ENCODE measurements at regions of chr9 and their contacts with region 1.

Region 1: DNA sequence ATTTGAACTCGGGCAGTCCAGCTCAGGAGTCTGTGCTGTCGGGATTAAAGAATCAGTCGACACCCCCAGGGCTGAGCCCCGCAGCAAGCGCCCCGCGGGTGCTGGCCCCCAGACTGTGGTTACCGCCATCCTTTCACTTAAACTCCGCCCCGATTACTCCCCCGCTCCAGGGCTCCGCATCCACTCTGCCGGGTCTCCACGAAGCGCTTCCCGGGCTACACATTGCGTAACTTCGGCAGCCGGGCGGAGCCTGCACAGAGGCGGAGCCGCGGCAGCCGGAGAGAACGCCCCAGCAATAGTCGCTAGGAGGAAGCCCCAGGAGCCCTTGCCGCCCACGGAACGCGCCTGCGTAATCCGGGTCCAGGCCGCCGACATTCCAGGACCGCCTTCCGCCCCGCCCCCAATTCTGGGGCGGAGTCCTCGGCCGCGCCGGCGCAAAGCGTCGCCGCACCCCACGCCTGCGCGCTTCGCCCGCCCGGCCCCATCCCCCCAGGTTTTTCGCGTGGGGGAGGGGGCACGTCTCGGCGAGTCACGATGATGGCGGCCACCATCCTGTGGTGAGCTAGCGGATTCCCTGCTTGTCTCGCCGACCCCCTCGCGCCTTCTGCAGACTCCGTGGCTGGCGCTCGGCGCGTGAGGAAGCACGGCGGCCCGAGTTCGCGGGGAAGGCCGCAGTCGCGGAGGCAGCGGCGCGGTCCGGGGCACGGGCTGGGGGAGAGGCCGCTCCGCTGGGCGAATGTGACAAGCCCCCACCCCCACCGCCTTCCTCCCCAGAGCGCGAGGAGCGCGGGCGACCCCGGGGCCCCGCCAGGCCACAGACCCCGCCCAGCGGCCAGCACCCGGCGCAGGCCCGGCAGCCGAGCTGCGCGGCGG is at the start of gene RAD23B:
- DNase-seq: peak; percentile 99
- H3K4me3 Mint-ChIP-seq: peak within 1 kb of the TSS; percentile 86
- H3K27ac Mint-ChIP-seq: peak within 1 kb of the TSS; percentile 88
- H3K4me1 Mint-ChIP-seq: peaks cover 45% of the 10 kb centered on the region
- H3K27me3 Mint-ChIP-seq: no peaks in the 10 kb centered on the region
- total RNA-seq, gene RAD23B: 106 to 109 TPM

Region 2: DNA sequence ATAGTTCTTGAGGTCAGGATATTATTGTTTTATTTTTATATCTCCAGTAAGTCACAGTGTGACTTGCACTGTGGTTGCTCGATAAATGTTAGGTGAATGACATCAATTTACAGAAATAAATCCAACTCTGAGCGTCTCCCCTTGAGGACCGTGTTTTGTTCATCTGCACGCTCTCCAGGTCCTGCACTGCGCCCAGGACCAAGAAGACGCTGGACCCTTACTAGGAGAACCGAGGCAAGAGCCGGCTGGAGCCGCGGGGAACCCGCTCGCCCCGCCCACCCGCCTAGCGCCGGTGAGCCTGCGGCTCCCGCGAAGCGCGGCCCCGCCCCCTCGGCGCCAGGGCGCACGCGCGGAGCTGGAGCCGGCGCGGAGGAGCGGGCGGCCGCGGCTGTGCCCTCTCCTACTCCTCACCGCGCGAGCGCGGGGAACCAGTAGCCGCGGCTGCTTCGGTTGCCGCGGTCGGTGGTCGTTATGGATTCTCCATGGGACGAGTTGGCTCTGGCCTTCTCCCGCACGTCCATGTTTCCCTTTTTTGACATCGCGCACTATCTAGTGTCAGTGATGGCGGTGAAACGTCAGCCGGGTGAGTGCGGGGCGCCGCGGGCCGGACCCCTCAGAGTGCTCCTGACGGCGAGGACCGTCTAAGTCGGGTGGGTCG is 1588.7 kb before region 1 on chr9 and contains the start of gene TMEM38B:
- CTCF ChIA-PET with region 1: no interaction called
- intact Hi-C with region 1: loop called (anchors 2 kb)
- DNase-seq: peak; percentile 76
- H3K4me3 Mint-ChIP-seq: peak within 1 kb of the TSS; percentile 90
- H3K27ac Mint-ChIP-seq: peak within 1 kb of the TSS; percentile 75
- H3K4me1 Mint-ChIP-seq: peaks cover 33% of the 10 kb centered on the region
- H3K27me3 Mint-ChIP-seq: peaks cover 10% of the 10 kb centered on the region
- total RNA-seq, gene TMEM38B: 17.6 TPM

Region 3: GRCh38 chr9:107213561-107214028 is 69.4 kb before region 1 on chr9:
- CTCF ChIA-PET with region 1: interaction called, 3 read pairs
- intact Hi-C with region 1: loop called (anchors 1 kb)
- DNase-seq: peak; percentile 64
- H3K4me3 Mint-ChIP-seq: no peak overlapping the region
- H3K27ac Mint-ChIP-seq: peak overlapping the region; percentile 48
- H3K4me1 Mint-ChIP-seq: peaks cover 10% of the 10 kb centered on the region
- H3K27me3 Mint-ChIP-seq: peaks cover 9% of the 10 kb centered on the region

Region 4: DNA sequence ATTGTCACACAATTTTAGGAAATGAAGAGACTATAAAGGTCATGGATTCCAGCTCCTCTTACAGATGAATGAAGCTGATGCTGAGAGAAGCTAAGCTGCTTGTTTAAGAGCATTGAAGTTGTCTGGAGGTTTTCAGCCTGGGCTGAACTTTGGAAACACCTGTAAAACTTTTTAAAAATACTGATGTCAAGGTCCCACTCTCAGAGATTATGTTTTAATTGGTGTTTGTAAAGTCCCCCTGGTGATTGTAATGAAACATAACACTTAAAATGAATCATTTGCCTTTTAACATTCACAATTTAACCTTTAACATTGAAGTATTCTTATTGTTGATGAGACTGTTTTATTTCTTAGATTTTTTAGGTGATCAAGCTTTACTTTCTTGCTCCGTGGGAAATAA is 16.4 kb after region 1 on chr9:
- CTCF ChIA-PET with region 1: interaction called, 8 read pairs
- intact Hi-C with region 1: loop called (anchors 1 kb)
- DNase-seq: no peak
- H3K4me3 Mint-ChIP-seq: no peak overlapping the region
- H3K27ac Mint-ChIP-seq: no peak overlapping the region
- H3K4me1 Mint-ChIP-seq: peaks cover 39% of the 10 kb centered on the region
- H3K27me3 Mint-ChIP-seq: no peaks in the 10 kb centered on the region

Region 5: GRCh38 chr9:107340920-107341632 is 58.1 kb after region 1 on chr9:
- CTCF ChIA-PET with region 1: interaction called, 8 read pairs
- intact Hi-C with region 1: loop called (anchors 1 kb)
- DNase-seq: peak; percentile 92
- H3K4me3 Mint-ChIP-seq: no peak overlapping the region
- H3K27ac Mint-ChIP-seq: no peak overlapping the region
- H3K4me1 Mint-ChIP-seq: peaks cover 9% of the 10 kb centered on the region
- H3K27me3 Mint-ChIP-seq: peaks cover 2% of the 10 kb centered on the region

Region 6: GRCh38 chr9:108933718-108934322 is 1650.8 kb after region 1 on chr9 and contains the start of gene ELP1:
- CTCF ChIA-PET with region 1: no interaction called
- intact Hi-C with region 1: loop called (anchors 1 kb)
- DNase-seq: peak; percentile 94
- H3K4me3 Mint-ChIP-seq: peak within 1 kb of the TSS; percentile 95
- H3K27ac Mint-ChIP-seq: peak within 1 kb of the TSS; percentile 92
- H3K4me1 Mint-ChIP-seq: peaks cover 27% of the 10 kb centered on the region
- H3K27me3 Mint-ChIP-seq: no peaks in the 10 kb centered on the region
- total RNA-seq, gene ELP1: 22.3 to 27.3 TPM

Region 7: GRCh38 chr9:109119439-109120203 is 1836.6 kb after region 1 on chr9 and contains the start of gene TMEM245:
- CTCF ChIA-PET with region 1: no interaction called
- intact Hi-C with region 1: loop called (anchors 1 kb)
- DNase-seq: peak; percentile 97
- H3K4me3 Mint-ChIP-seq: peak within 1 kb of the TSS; percentile 90
- H3K27ac Mint-ChIP-seq: peak within 1 kb of the TSS; percentile 78
- H3K4me1 Mint-ChIP-seq: peaks cover 40% of the 10 kb centered on the region
- H3K27me3 Mint-ChIP-seq: no peaks in the 10 kb centered on the region
- total RNA-seq, gene TMEM245: 19.9 TPM

Measured in activated naive CD4-positive, alpha-beta T cell treated with anti-CD3 and anti-CD28 coated beads for 36 hours (primary cell).